ENCODE measurements at regions of chr9 and their contacts with region 1.

Region 1: GRCh38 chr9:127450830-127451724 is at the starts of genes LRSAM1 and RPL12:
- DNase-seq: peak; percentile 84 to 96 (median 89)
- ATAC-seq: peak; percentile 69
- H3K4me3 ChIP-seq: peak within 1 kb of the TSS; percentile 78
- H3K27ac ChIP-seq: peak within 1 kb of the TSS; percentile 82
- H3K4me1 ChIP-seq: peaks cover 22 to 28% of the 10 kb centered on the region in 2 experiments; a peak in 4 of 5 replicates
- H3K27me3 ChIP-seq: no peaks in the 10 kb centered on the region
- CTCF ChIP-seq: peak in 1 of 3 experiments; percentile 29; a peak in 1 of 6 replicates
- EP300 ChIP-seq: no peak
- POLR2A ChIP-seq: peak; percentile 100
- RAD21 ChIP-seq: no peak; a peak in 1 of 4 replicates
- polyA plus RNA-seq, gene LRSAM1: 0.07 to 0.32 TPM
- polyA plus RNA-seq, gene RPL12: 2,219 to 2,376 TPM

Region 2: DNA sequence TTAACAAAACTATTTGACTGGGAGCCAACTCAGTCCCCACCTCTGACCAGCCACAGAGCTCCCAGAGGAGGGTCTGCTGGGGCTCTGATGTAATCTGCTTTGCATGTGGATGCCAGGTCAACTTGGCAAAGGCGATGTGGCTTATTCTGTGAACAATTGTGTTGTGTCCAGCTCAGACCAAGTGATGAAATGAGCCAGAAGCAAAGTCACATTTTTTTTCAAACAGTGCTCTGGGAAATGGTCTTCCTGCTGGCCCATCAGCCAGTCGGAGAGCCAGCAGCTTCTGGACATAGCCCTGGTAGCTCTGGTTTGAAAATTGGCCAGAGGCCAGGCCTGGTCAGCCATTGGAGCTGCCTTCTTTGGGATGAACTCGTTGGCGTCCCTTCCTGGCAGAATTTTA is 415.1 kb before region 1 on chr9:
- CTCF ChIA-PET with region 1: no interaction called
- POLR2A ChIA-PET with region 1: no interaction called
- in situ Hi-C with region 1: no loop called
- intact Hi-C with region 1: no loop called
- DNase-seq: no peak
- ATAC-seq: no peak
- H3K4me3 ChIP-seq: no peak overlapping the region
- H3K27ac ChIP-seq: no peak overlapping the region
- H3K4me1 ChIP-seq: peaks cover 0 to 12% of the 10 kb centered on the region in 2 experiments; a peak in 3 of 5 replicates
- H3K27me3 ChIP-seq: peaks cover 0 to 10% of the 10 kb centered on the region in 2 experiments; a peak in 2 of 5 replicates
- CTCF ChIP-seq: no peak
- EP300 ChIP-seq: no peak
- POLR2A ChIP-seq: no peak
- RAD21 ChIP-seq: no peak

Region 3: DNA sequence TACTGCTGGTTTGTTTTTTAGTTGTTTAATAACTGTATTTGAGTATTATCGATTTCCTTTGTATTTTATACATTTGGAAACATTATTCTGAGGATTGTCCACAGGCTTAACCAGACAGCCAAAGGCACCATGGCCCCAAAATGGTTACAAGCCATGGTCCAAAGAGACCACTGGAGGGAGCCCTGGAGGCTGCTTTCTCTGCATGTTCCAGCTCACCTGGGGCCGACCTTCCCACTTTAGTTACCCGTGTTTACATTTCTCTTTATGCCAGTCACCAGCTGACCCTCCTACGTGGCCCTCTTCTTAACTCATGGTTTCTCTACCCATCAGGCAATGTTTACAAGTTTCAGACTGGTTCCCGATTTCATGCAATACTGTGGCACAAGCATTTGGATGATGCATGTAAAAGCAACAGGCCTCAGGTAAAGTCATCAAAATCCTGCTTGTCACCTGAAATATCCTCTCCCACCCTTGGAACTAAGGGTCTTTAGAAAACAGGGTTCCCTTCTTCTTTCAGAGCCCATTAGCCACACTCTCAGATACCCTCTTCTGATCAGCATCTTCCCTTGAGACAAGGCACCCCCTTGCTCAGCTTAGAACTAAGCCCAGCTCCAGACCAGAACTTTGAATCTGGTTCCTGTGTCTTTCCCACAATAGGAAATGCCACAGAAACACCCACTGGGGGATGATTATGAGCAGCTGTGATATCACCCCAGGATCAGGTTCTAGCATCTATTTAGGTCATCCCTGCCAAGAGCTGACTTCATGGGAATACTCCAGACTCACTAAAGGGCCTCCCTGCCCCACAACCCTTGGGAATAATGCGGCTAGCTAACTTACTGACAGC is 236.4 kb before region 1 on chr9:
- CTCF ChIA-PET with region 1: no interaction called
- POLR2A ChIA-PET with region 1: interaction called, 4 read pairs
- in situ Hi-C with region 1: no loop called
- intact Hi-C with region 1: loop called (anchors 1 kb)
- DNase-seq: peak; percentile 71 to 77 (median 74)
- ATAC-seq: peak; percentile 89
- H3K4me3 ChIP-seq: no peak overlapping the region
- H3K27ac ChIP-seq: no peak overlapping the region
- H3K4me1 ChIP-seq: peaks cover 7 to 14% of the 10 kb centered on the region in 2 experiments; a peak in 4 of 5 replicates
- H3K27me3 ChIP-seq: peaks cover 27 to 81% of the 10 kb centered on the region in 2 experiments
- CTCF ChIP-seq: peak; percentile 81 to 87 (median 84)
- EP300 ChIP-seq: no peak
- POLR2A ChIP-seq: no peak
- RAD21 ChIP-seq: peak; percentile 69 to 78

Region 4: DNA sequence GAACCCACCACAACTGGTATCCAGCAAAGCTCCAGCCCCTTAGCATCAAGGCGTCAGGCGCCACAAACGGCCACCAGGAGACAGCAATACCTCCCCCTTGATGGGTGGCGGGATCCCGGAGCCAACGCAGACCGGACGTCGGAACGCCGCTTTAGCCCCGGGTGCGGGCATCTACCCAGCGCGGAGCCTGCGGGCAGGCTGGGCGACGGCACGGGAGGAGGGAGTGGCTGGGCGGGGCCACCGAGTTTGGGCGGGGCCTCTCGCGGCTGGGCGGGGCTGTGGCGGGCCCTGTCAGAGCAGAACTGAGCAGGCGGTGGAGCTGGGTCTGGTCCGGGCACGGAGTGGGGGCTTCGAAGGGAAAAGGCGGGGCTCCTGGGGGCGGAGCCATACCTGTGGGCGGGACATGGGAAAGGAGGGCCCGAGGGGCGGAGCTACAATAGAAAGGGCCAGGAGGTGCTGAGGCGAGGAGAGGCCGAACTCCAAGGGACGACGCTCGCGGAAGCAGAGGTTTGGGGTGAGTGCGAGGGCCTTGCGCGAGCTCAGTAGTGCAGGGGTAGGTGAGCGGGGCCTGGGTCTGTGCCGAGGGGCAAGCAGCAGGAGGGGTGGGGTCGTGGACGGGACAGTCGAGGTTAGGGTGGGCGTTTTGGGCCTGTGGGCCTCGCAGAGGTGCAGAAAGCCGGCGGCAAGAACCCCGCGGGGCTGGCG is 226.7 kb before region 1 on chr9:
- CTCF ChIA-PET with region 1: no interaction called
- POLR2A ChIA-PET with region 1: interaction called, 11 read pairs
- in situ Hi-C with region 1: no loop called
- intact Hi-C with region 1: no loop called
- DNase-seq: peak; percentile 84 to 98 (median 96)
- ATAC-seq: peak; percentile 90
- H3K4me3 ChIP-seq: peak overlapping the region; percentile 57
- H3K27ac ChIP-seq: peak overlapping the region; percentile 64; the same call in 2 of the 3 replicates
- H3K4me1 ChIP-seq: peaks cover 5 to 21% of the 10 kb centered on the region in 2 experiments; a peak in 4 of 5 replicates
- H3K27me3 ChIP-seq: peaks cover 11 to 45% of the 10 kb centered on the region in 2 experiments; a peak in 4 of 5 replicates
- CTCF ChIP-seq: peak in 1 of 3 experiments; percentile 27; a peak in 1 of 6 replicates
- EP300 ChIP-seq: no peak
- POLR2A ChIP-seq: no peak
- RAD21 ChIP-seq: no peak

Region 5: DNA sequence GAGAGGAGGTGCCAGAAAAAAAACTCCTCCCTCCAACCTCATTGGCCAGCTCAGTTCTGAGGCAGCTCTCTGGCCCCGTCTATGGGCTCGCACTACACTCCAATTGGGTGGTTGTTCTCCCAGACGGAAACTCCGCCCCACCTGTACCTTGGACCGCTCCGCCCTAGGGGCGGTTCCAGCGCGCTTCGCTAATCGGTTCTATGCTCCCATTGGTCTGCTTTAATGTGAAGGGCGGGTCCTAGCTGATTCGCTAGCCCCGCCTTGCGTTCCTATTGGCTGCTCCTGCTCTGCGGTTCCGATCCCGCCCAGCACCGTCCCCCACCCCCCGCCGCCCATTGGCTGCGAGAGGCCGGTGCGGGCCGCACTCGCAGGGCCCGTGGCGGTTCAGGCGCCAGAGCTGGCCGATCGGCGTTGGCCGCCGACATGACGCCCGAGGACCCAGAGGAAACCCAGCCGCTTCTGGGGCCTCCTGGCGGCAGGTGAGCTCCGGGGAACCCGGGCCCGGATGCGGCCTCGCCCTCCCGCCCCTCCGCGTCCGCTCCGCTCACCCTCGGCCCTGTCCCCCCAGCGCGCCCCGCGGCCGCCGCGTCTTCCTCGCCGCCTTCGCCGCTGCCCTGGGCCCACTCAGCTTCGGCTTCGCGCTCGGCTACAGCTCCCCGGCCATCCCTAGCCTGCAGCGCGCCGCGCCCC is 54.1 kb before region 1 on chr9 and contains the start of gene SLC2A8:
- CTCF ChIA-PET with region 1: no interaction called
- POLR2A ChIA-PET with region 1: interaction called, 10 read pairs
- in situ Hi-C with region 1: no loop called
- intact Hi-C with region 1: no loop called
- DNase-seq: peak; percentile 98 to 99 (median 99)
- ATAC-seq: peak; percentile 97
- H3K4me3 ChIP-seq: peak within 1 kb of the TSS; percentile 66
- H3K27ac ChIP-seq: peak within 1 kb of the TSS; percentile 64; the same call in 2 of the 3 replicates
- H3K4me1 ChIP-seq: peaks cover 17 to 25% of the 10 kb centered on the region in 2 experiments; a peak in 3 of 5 replicates
- H3K27me3 ChIP-seq: no peaks in the 10 kb centered on the region; a peak in 1 of 5 replicates
- CTCF ChIP-seq: peak in 1 of 3 experiments; percentile 37; a peak in 1 of 6 replicates
- EP300 ChIP-seq: no peak
- POLR2A ChIP-seq: peak; percentile 68; the same call in 1 of the 2 replicates
- RAD21 ChIP-seq: no peak
- polyA plus RNA-seq, gene SLC2A8: 0.13 to 1.1 TPM

Region 6: GRCh38 chr9:127525401-127526187 is 74.5 kb after region 1 on chr9:
- CTCF ChIA-PET with region 1: no interaction called
- POLR2A ChIA-PET with region 1: no interaction called
- in situ Hi-C with region 1: no loop called
- intact Hi-C with region 1: no loop called
- DNase-seq: peak; percentile 49 to 72 (median 62)
- ATAC-seq: peak; percentile 76
- H3K4me3 ChIP-seq: no peak overlapping the region
- H3K27ac ChIP-seq: no peak overlapping the region
- H3K4me1 ChIP-seq: peaks cover 0 to 14% of the 10 kb centered on the region in 2 experiments; a peak in 1 of 5 replicates
- H3K27me3 ChIP-seq: no peaks in the 10 kb centered on the region
- CTCF ChIP-seq: peak; percentile 61 to 73 (median 67)
- EP300 ChIP-seq: no peak
- POLR2A ChIP-seq: no peak
- RAD21 ChIP-seq: peak; percentile 22 to 73; a peak in 3 of 4 replicates

Measured in K562 (cell line).